ENCODE measurements at regions of chr9 and their contacts with region 1.

Region 1: DNA sequence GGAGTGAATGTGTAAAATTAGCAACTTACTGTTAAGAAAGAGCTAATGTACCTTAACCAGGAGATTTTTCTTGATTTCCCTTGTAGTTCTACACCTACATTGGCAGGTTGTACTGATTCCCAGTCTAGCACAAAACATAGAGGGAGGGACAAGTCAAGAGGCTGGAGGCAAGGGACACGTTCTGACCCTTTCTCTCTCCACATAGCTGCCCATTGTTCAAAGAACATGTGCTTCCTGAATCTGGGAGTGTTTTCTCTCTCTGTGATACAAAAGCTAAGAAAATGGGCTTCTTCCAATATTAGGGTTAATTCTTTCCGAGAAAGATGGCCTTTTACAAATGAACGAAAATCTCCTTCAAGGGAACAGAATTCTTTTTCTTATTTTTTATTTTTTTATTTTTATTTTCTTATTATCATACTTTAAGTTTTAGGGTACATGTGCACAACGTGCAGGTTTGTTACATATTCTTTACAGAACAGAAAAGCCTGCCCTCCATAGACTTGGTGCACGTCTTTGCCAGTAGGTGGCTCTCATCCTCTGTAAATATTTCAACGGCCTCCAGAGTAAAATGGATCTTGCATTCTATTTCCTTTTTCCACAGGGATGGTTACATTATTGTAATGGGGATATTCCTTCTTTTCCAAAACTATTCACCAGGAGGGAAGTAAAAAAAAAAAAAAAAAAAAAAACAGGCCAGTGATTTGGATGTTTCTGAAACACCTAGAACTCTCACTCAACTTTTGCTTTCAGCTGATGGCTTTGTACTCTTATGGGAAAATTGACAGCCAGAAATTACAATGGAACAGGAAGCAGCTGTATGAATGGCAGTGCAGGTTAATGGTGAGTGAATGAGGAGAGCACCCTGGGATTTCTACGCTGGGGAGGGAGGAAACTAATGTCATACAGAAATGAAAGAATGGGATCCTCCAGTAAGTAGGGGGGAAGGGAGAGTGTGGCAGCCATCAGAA is 13.1 kb upstream of the IFNA5 start:
- DNase-seq: no peak
- CTCF ChIP-seq: peak; percentile 77

Region 2: GRCh38 chr9:21210311-21210710 is 107.9 kb before region 1 on chr9:
- in situ Hi-C with region 1: loop called (anchors 25 kb)
- DNase-seq: no peak
- CTCF ChIP-seq: no peak

Measured in GM13977 (cell line).